HCT116 (cell line): ENCODE measurements at regions of chr5 and their contacts with region 1.

Region 1: DNA sequence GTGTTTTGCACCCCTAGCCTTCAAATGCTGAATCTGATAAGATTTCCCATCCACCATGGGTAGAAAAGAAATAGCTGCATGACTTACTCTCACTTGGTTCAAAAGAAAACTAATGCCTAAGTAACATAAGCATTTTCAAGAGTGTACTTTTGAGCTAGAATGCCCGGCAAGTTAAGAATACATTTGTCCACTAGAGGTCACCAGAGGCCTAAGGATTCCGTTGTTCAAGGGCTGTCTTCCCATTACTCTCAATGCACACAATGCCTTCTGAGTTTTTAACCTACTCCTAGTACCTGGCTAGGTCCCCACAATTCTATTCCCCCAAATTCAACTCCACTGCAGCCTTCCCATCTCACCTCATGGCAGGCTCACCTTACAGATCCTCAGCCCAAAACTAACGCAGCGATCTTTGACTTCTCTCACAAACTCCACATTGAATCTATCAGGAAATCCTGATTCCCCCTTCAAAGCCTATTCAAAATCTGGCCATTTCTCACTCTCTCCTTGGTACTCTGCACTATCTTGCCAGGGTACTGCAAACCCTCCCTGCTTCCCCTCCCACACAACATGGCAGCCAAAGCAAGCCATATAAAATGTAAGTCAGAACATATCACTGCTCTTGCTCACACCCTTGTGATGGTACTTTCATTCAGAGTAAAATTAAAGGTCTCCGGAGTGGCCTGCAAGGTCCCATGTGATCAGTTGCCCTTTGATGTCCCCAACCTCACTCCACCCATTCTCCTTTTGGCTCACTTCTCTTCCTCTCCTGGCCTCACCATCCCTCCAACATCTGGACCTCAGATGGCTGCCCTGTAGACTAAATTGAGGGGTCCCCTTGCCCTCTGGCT is 13.4 kb downstream of the OXCT1 start:
- DNase-seq: peak; percentile 58
- ATAC-seq: peak; percentile 91
- H3K4me3 ChIP-seq: no peak overlapping the region
- H3K27ac ChIP-seq: no peak overlapping the region
- H3K4me1 ChIP-seq: no peaks in the 10 kb centered on the region
- H3K27me3 ChIP-seq: no peaks in the 10 kb centered on the region
- CTCF ChIP-seq: peak; percentile 36 to 80 (median 67); a peak in 5 of 6 replicates
- POLR2A ChIP-seq: no peak
- RAD21 ChIP-seq: peak; percentile 82

Region 2: GRCh38 chr5:42057254-42057690 is 200.4 kb after region 1 on chr5:
- CTCF ChIA-PET with region 1: interaction called, 98 read pairs
- POLR2A ChIA-PET with region 1: interaction called, 5 read pairs
- RAD21 ChIA-PET with region 1: interaction called, 9 to 14 read pairs
- intact Hi-C with region 1: loop called (anchors 1 kb)
- DNase-seq: peak; percentile 51
- ATAC-seq: peak; percentile 97
- H3K4me3 ChIP-seq: no peak overlapping the region
- H3K27ac ChIP-seq: no peak overlapping the region
- H3K4me1 ChIP-seq: no peaks in the 10 kb centered on the region
- H3K27me3 ChIP-seq: no peaks in the 10 kb centered on the region; the same call in 1 of the 2 replicates
- CTCF ChIP-seq: peak; percentile 52 to 87 (median 79); a peak in 5 of 6 replicates
- POLR2A ChIP-seq: no peak
- RAD21 ChIP-seq: peak; percentile 76

Region 3: GRCh38 chr5:42423285-42424165 is 566.7 kb after region 1 on chr5 and contains the start of gene GHR:
- CTCF ChIA-PET with region 1: no interaction called
- POLR2A ChIA-PET with region 1: no interaction called
- RAD21 ChIA-PET with region 1: no interaction called
- intact Hi-C with region 1: loop called (anchors 5 kb)
- DNase-seq: peak; percentile 6
- ATAC-seq: peak; percentile 78
- H3K4me3 ChIP-seq: no peak within 1 kb of the TSS
- H3K27ac ChIP-seq: no peak within 1 kb of the TSS
- H3K4me1 ChIP-seq: no peaks in the 10 kb centered on the region
- H3K27me3 ChIP-seq: no peaks in the 10 kb centered on the region
- CTCF ChIP-seq: peak in 2 of 3 experiments; percentile 32 to 38; a peak in 3 of 6 replicates
- POLR2A ChIP-seq: no peak
- RAD21 ChIP-seq: peak; percentile 16; the same call in 1 of the 2 replicates
- total RNA-seq, gene GHR: not detected

Region 4: GRCh38 chr5:42583322-42583721 is 726.5 kb after region 1 on chr5:
- CTCF ChIA-PET with region 1: interaction called, 14 read pairs
- POLR2A ChIA-PET with region 1: no interaction called
- RAD21 ChIA-PET with region 1: no interaction called
- intact Hi-C with region 1: loop called (anchors 2 kb)
- DNase-seq: peak; percentile 37
- ATAC-seq: peak; percentile 80
- H3K4me3 ChIP-seq: no peak overlapping the region
- H3K27ac ChIP-seq: no peak overlapping the region
- H3K4me1 ChIP-seq: no peaks in the 10 kb centered on the region
- H3K27me3 ChIP-seq: peaks cover 17% of the 10 kb centered on the region; the same call in 1 of the 2 replicates
- CTCF ChIP-seq: peak; percentile 40 to 88 (median 79); a peak in 5 of 6 replicates
- POLR2A ChIP-seq: no peak
- RAD21 ChIP-seq: peak; percentile 63

Region 5: GRCh38 chr5:42636425-42636824 is 779.6 kb after region 1 on chr5:
- CTCF ChIA-PET with region 1: no interaction called
- POLR2A ChIA-PET with region 1: no interaction called
- RAD21 ChIA-PET with region 1: no interaction called
- intact Hi-C with region 1: loop called (anchors 5 kb)
- DNase-seq: peak; percentile 22
- ATAC-seq: peak; percentile 86
- H3K4me3 ChIP-seq: no peak overlapping the region
- H3K27ac ChIP-seq: no peak overlapping the region
- H3K4me1 ChIP-seq: no peaks in the 10 kb centered on the region
- H3K27me3 ChIP-seq: no peaks in the 10 kb centered on the region; the same call in 1 of the 2 replicates
- CTCF ChIP-seq: peak; percentile 17 to 51 (median 37); a peak in 4 of 6 replicates
- POLR2A ChIP-seq: no peak
- RAD21 ChIP-seq: peak; percentile 23

Region 6: GRCh38 chr5:42767491-42768105 is 910.7 kb after region 1 on chr5:
- CTCF ChIA-PET with region 1: interaction called, 17 read pairs
- POLR2A ChIA-PET with region 1: no interaction called
- RAD21 ChIA-PET with region 1: interaction called in 1 of 2 experiments, 5 read pairs
- intact Hi-C with region 1: loop called (anchors 1 kb)
- DNase-seq: no peak
- ATAC-seq: 0 out of 2 replicates have a peak, but pooled peaks have one; percentile 57
- H3K4me3 ChIP-seq: no peak overlapping the region
- H3K27ac ChIP-seq: no peak overlapping the region
- H3K4me1 ChIP-seq: no peaks in the 10 kb centered on the region
- H3K27me3 ChIP-seq: no peaks in the 10 kb centered on the region
- CTCF ChIP-seq: peak; percentile 29 to 65 (median 45); a peak in 4 of 6 replicates
- POLR2A ChIP-seq: no peak
- RAD21 ChIP-seq: peak; percentile 66

Region 7: GRCh38 chr5:42889311-42889933 is 1032.6 kb after region 1 on chr5:
- CTCF ChIA-PET with region 1: interaction called, 14 read pairs
- POLR2A ChIA-PET with region 1: interaction called, 4 read pairs
- RAD21 ChIA-PET with region 1: interaction called in 1 of 2 experiments, 3 read pairs
- intact Hi-C with region 1: loop called (anchors 2 kb)
- DNase-seq: peak; percentile 66
- ATAC-seq: peak; percentile 94
- H3K4me3 ChIP-seq: no peak overlapping the region
- H3K27ac ChIP-seq: no peak overlapping the region
- H3K4me1 ChIP-seq: peaks cover 0 to 4% of the 10 kb centered on the region in 2 experiments; a peak in 2 of 4 replicates
- H3K27me3 ChIP-seq: peaks cover 5% of the 10 kb centered on the region
- CTCF ChIP-seq: peak; percentile 52 to 93 (median 86); a peak in 5 of 6 replicates
- POLR2A ChIP-seq: no peak
- RAD21 ChIP-seq: peak; percentile 85